ENCODE measurements at regions of chr19 and their contacts with region 1.

Region 1: GRCh38 chr19:17555480-17555928 is at the start of gene COLGALT1:
- DNase-seq: peak; percentile 94 to 98 (median 95)
- H3K4me3 ChIP-seq: peak within 1 kb of the TSS; percentile 54 to 80
- H3K4me3 Mint-ChIP-seq: peak within 1 kb of the TSS; percentile 83 to 89 (median 86)
- H3K27ac ChIP-seq: peak within 1 kb of the TSS; percentile 62
- H3K27ac Mint-ChIP-seq: peak within 1 kb of the TSS in 6 of 7 donors; percentile 63 to 92 (median 76)
- H3K4me1 ChIP-seq: peaks cover 18% of the 10 kb centered on the region
- H3K4me1 Mint-ChIP-seq: peaks cover 8 to 25% (median 14%) of the 10 kb centered on the region in 4 donors
- H3K27me3 ChIP-seq: no peaks in the 10 kb centered on the region
- H3K27me3 Mint-ChIP-seq: no peaks in the 10 kb centered on the region
- total RNA-seq, gene COLGALT1: 68.3 to 74.7 TPM

Region 2: DNA sequence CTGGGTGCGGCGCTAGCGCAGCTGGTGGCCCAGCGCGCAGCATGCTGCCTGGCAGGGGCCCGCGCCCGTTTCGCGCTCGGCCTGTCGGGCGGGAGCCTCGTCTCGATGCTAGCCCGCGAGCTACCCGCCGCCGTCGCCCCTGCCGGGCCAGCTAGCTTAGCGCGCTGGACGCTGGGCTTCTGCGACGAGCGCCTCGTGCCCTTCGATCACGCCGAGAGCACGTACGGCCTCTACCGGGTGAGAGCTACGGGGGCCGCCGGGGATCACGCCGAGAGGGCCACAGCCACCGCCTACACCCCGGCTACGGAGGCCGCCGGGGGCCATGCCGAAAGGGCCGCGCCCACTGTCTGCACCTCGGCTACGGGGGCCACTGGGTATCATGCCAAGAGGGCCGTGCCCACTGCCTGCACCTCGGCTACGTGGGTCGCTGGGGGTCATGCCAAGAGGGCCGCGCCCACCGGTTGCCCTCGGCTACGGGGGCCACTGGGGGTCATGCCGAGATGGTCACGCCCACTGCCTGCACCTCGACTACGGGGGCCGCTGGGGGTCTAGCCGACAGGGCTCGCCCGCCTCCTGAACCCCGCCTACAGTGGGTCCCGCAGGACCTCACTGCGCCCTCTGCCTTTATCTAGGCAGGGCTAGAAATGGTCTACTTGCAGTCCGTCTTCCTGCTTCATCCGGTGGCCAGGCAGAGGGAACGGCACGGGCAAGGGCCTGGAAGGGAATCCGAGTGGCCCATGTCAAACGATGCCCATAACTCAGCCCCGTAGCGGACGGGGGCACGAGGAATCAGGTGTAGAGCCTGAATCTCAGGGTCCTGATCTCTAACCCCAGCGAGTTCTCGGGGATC is 43.6 kb before region 1 on chr19:
- CTCF ChIA-PET with region 1: interaction called, 7 read pairs
- POLR2A ChIA-PET with region 1: interaction called, 6 read pairs
- intact Hi-C with region 1: loop called (anchors 1 kb)
- DNase-seq: peak; percentile 86 to 90 (median 88)
- H3K4me3 ChIP-seq: peak overlapping the region; percentile 50 to 96
- H3K4me3 Mint-ChIP-seq: peak overlapping the region; percentile 88 to 100 (median 98)
- H3K27ac ChIP-seq: peak overlapping the region; percentile 92
- H3K27ac Mint-ChIP-seq: peak overlapping the region; percentile 90 to 98 (median 95)
- H3K4me1 ChIP-seq: peaks cover 20% of the 10 kb centered on the region
- H3K4me1 Mint-ChIP-seq: peaks cover 17 to 47% (median 30%) of the 10 kb centered on the region in 4 donors
- H3K27me3 ChIP-seq: no peaks in the 10 kb centered on the region
- H3K27me3 Mint-ChIP-seq: no peaks in the 10 kb centered on the region

Region 3: DNA sequence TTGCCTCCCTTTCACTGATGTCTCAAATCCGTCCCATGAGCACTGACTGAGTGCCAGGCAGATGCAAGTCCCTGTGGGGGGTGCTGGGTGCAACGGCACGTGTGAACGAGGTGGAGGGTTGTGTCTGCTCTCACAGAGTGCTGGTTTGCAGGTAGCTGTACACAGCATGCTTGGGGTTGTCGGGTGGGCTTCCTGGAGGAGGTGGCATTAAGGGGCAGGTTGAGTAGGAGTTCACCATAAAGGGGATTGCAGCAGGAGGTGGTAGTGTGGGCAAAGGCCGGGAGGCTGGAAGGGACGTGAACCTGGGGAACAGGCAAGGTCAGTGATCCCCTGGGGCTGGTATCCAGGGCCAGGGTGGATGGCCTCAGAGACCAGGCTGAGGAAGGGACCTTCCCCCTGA is 17.1 kb after region 1 on chr19:
- CTCF ChIA-PET with region 1: interaction called, 12 read pairs
- POLR2A ChIA-PET with region 1: no interaction called
- intact Hi-C with region 1: no loop called
- DNase-seq: no peak
- H3K4me3 ChIP-seq: no peak overlapping the region
- H3K4me3 Mint-ChIP-seq: no peak overlapping the region
- H3K27ac ChIP-seq: no peak overlapping the region
- H3K27ac Mint-ChIP-seq: peak overlapping the region in 3 of 7 donors; percentile 42 to 72 (median 61)
- H3K4me1 ChIP-seq: no peaks in the 10 kb centered on the region
- H3K4me1 Mint-ChIP-seq: peaks cover 0 to 5% (median 2%) of the 10 kb centered on the region in 4 donors
- H3K27me3 ChIP-seq: no peaks in the 10 kb centered on the region
- H3K27me3 Mint-ChIP-seq: no peaks in the 10 kb centered on the region

Region 4: GRCh38 chr19:17605761-17606745 is 50.5 kb after region 1 on chr19:
- CTCF ChIA-PET with region 1: interaction called, 3 read pairs
- POLR2A ChIA-PET with region 1: no interaction called
- intact Hi-C with region 1: loop called (anchors 1 kb)
- DNase-seq: peak; percentile 82 to 93 (median 87)
- H3K4me3 ChIP-seq: peak overlapping the region; percentile 17 to 54
- H3K4me3 Mint-ChIP-seq: peak overlapping the region; percentile 72 to 84 (median 81)
- H3K27ac ChIP-seq: peak overlapping the region; percentile 17
- H3K27ac Mint-ChIP-seq: peak overlapping the region; percentile 72 to 91 (median 82)
- H3K4me1 ChIP-seq: peaks cover 13% of the 10 kb centered on the region
- H3K4me1 Mint-ChIP-seq: peaks cover 7 to 11% (median 9%) of the 10 kb centered on the region in 4 donors
- H3K27me3 ChIP-seq: peaks cover 8% of the 10 kb centered on the region
- H3K27me3 Mint-ChIP-seq: peaks cover 25 to 35% of the 10 kb centered on the region in 2 donors

Region 5: DNA sequence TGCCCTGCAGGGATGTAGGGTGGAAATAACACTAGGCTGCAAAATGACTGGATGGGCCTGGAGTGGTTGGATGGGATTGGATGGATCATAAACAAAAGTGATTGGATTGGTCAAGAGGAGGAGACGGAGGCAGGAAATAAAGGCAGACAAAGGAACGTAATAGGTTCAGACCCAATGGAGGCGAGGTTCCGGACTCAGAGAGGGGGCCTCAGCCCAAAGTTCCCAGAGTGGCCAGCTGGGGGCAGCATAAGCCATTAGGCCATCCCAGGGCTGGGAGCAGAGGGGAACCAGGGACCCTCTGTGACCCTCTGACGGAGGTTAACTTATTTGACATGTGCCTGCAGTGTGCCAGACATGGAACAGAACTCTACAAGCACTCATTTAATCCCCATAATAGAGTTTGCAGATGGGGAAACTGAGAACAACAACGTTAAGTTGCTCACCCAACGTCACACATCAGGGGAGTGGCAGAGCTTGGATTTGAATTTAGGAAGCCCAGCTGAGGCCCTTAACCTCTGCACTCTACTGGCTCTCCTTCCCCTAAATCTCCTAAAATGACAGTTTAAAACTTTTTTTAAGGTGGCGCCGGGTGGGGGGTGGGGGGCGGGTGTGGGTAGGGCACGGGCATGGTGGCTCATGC is 148.4 kb after region 1 on chr19:
- CTCF ChIA-PET with region 1: no interaction called
- POLR2A ChIA-PET with region 1: no interaction called
- intact Hi-C with region 1: no loop called
- DNase-seq: peak; percentile 62 to 71 (median 66)
- H3K4me3 ChIP-seq: no peak overlapping the region
- H3K4me3 Mint-ChIP-seq: no peak overlapping the region
- H3K27ac ChIP-seq: no peak overlapping the region
- H3K27ac Mint-ChIP-seq: peak overlapping the region in 2 of 7 donors; percentile 5 to 78
- H3K4me1 ChIP-seq: no peaks in the 10 kb centered on the region
- H3K4me1 Mint-ChIP-seq: peaks cover 0 to 2% (median 0%) of the 10 kb centered on the region in 4 donors
- H3K27me3 ChIP-seq: no peaks in the 10 kb centered on the region
- H3K27me3 Mint-ChIP-seq: peaks cover 3 to 10% of the 10 kb centered on the region in 2 donors